A549 (cell line): ENCODE measurements at regions of chr17 and their contacts with region 1.

Region 1: GRCh38 chr17:18004884-18005305 is 32.2 kb downstream of the DRC3 start:
- DNase-seq: peak in 1 of 2 experiments; percentile 80
- ATAC-seq: peak; percentile 79 to 87; a peak in 5 of 6 replicates
- H3K4me3 ChIP-seq: no peak overlapping the region
- H3K27ac ChIP-seq: no peak overlapping the region
- H3K4me1 ChIP-seq: no peaks in the 10 kb centered on the region
- CTCF ChIP-seq: no peak
- EP300 ChIP-seq: no peak
- POLR2A ChIP-seq: no peak
- RAD21 ChIP-seq: no peak

Region 2: DNA sequence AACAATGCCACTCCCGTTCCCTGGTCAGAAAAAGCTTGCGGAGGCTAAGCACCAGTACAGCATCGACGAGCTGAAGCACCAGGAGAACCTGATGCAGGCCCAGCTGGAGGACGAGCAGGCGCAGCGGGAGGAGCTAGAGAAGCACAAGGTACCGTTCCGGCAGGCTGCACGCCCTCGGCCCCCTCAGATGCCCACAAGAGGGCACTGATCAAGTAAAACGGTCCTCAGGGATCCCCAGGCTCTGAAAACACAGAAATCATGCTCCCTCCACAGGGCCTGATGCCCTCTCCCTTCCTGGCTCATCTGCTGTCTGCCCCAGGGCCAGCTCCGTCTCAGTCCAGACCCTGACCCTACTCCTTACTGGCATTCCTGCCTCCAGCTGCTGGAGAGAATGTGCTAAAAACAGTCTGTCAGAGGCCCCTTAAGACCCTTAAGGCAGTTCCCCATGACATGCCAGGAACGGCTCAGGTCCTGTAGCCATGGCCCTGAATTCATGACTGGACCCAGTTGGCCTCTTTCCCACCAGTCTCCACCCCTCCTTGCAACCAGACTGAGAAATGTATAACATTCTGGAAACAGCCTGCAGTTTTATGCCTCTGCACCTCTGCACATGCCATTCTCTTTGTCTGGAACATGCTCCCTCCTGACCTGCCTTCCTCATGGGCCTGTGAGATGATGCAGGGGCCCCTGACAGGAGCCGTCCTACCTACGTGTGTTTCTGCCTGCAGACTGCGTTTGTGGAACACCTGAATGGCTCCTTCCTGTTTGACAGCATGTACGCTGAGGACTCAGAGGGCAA is 10.4 kb before region 1 on chr17:
- CTCF ChIA-PET with region 1: interaction called, 24 read pairs
- POLR2A ChIA-PET with region 1: no interaction called
- DNase-seq: peak; percentile 62 to 74
- ATAC-seq: peak; percentile 73 to 82
- H3K4me3 ChIP-seq: no peak overlapping the region
- H3K27ac ChIP-seq: peak overlapping the region in 1 of 2 experiments; percentile 84; a peak in 2 of 6 replicates
- H3K4me1 ChIP-seq: peaks cover 38% of the 10 kb centered on the region
- CTCF ChIP-seq: peak; percentile 52
- EP300 ChIP-seq: no peak
- POLR2A ChIP-seq: no peak
- RAD21 ChIP-seq: peak; percentile 38 to 48; a peak in 3 of 5 replicates

Region 3: GRCh38 chr17:18017958-18018357 is 13.1 kb after region 1 on chr17:
- CTCF ChIA-PET with region 1: interaction called, 14 read pairs
- POLR2A ChIA-PET with region 1: no interaction called
- DNase-seq: no peak
- ATAC-seq: no peak
- H3K4me3 ChIP-seq: no peak overlapping the region
- H3K27ac ChIP-seq: no peak overlapping the region
- H3K4me1 ChIP-seq: no peaks in the 10 kb centered on the region
- CTCF ChIP-seq: no peak
- EP300 ChIP-seq: no peak
- POLR2A ChIP-seq: no peak
- RAD21 ChIP-seq: no peak

Region 4: GRCh38 chr17:18025945-18026776 is 21.3 kb after region 1 on chr17:
- CTCF ChIA-PET with region 1: interaction called, 11 read pairs
- POLR2A ChIA-PET with region 1: no interaction called
- DNase-seq: no peak
- ATAC-seq: peak in 1 of 2 experiments; percentile 31; a peak in 1 of 6 replicates
- H3K4me3 ChIP-seq: no peak overlapping the region
- H3K27ac ChIP-seq: no peak overlapping the region
- H3K4me1 ChIP-seq: peaks cover 11% of the 10 kb centered on the region; the same call in 2 of the 3 replicates
- CTCF ChIP-seq: no peak
- EP300 ChIP-seq: no peak
- POLR2A ChIP-seq: no peak
- RAD21 ChIP-seq: no peak

Region 5: GRCh38 chr17:18064053-18064452 is 59.2 kb after region 1 on chr17:
- CTCF ChIA-PET with region 1: no interaction called
- POLR2A ChIA-PET with region 1: no interaction called
- DNase-seq: no peak
- ATAC-seq: no peak
- H3K4me3 ChIP-seq: no peak overlapping the region
- H3K27ac ChIP-seq: no peak overlapping the region
- H3K4me1 ChIP-seq: peaks cover 3% of the 10 kb centered on the region; the same call in 1 of the 3 replicates
- CTCF ChIP-seq: no peak
- EP300 ChIP-seq: no peak
- POLR2A ChIP-seq: no peak
- RAD21 ChIP-seq: no peak